ENCODE measurements at regions of chr17 and their contacts with region 1.

Region 1: DNA sequence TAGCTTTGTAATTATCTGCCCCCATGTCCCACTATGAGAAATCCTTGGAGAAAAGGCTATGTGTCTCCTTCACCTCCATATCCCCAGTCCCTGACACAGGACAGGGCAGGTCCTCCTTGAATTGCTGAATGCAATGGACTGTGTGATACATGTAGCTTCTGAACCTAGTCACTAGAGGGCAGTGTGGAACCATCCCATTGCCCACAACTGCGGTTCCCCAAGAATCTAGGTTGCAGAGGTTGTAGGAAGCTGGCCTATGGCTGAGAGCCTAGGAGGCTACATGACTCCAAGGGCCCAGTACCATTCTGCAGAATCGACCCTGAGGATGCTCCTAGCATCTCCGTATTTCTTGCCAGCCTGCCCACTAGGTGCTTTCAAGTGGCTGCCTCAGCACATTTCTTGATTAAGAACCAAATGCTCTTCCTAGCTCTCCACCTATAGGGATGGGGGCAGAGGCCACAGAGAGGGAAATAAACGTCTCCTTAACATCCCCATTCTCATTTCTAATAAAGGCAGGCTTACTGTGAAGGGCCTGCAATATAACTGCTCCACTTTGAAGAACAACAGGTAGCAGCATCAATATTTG is 394.0 kb downstream of the CA10 start:
- DNase-seq: peak; percentile 58
- H3K4me3 ChIP-seq: no peak overlapping the region
- H3K27ac ChIP-seq: no peak overlapping the region
- H3K4me1 ChIP-seq: no peaks in the 10 kb centered on the region
- H3K27me3 ChIP-seq: no peaks in the 10 kb centered on the region
- CTCF ChIP-seq: peak; percentile 92 to 97

Region 2: DNA sequence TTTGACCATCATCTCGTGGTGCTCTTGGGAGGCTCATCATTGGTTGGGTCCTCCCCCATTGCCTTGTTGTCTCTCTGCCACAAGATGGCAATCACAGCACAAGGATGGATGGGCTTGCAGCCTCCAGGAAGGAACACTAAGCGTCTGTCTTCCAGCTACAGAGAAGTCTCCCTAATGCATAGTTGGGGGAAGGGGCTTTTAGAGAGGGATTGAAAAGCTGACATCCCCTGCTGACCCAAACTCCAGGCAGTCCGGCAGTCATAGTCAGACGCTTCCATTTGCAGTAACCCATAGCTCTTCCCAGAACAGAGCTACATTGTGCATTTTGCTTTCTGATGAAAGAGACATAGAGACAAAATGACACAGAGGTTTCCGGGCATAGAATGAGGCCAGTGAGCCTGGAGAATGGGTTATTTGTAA is 392.7 kb before region 1 on chr17:
- CTCF ChIA-PET with region 1: no interaction called
- dilution Hi-C with region 1: no loop called
- in situ Hi-C with region 1: no loop called
- intact Hi-C with region 1: loop called (anchors 2 kb)
- DNase-seq: peak; percentile 47
- H3K4me3 ChIP-seq: no peak overlapping the region
- H3K27ac ChIP-seq: no peak overlapping the region
- H3K4me1 ChIP-seq: no peaks in the 10 kb centered on the region
- H3K27me3 ChIP-seq: no peaks in the 10 kb centered on the region
- CTCF ChIP-seq: peak; percentile 77 to 87

Region 3: GRCh38 chr17:51585514-51586104 is 178.9 kb before region 1 on chr17:
- CTCF ChIA-PET with region 1: no interaction called
- dilution Hi-C with region 1: no loop called
- in situ Hi-C with region 1: no loop called
- intact Hi-C with region 1: loop called (anchors 1 kb)
- DNase-seq: peak; percentile 21
- H3K4me3 ChIP-seq: no peak overlapping the region
- H3K27ac ChIP-seq: no peak overlapping the region
- H3K4me1 ChIP-seq: no peaks in the 10 kb centered on the region
- H3K27me3 ChIP-seq: no peaks in the 10 kb centered on the region
- CTCF ChIP-seq: peak; percentile 86 to 96

Region 4: DNA sequence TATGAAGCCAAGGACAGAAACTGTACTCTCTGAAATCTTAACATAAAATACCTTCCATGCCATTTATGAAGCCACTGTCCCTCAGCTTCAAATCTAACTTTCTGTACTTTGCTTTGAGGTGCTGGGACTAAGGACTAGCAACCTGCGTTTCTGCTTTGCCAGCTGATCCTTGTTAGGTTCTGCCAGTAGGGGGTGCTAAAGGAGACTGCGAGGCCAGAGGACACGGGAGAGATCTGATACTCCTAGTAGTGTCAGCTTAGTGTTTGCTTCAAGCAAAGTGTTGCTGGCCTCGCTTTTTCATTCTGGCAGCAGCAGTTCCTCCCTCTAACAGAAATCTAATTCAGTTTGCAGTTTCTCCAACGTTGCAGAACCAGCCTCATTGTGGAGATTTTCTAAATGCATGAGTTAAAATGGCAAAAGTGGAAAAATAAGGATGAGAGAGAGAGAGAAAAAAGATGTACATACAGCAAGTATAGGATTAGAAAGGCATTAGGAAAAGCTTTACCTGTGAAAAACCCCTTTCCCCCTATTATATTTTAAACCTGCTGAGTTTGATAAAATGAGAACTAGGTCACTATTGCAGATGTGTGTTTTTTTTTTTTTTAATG is 96.6 kb after region 1 on chr17:
- CTCF ChIA-PET with region 1: no interaction called
- dilution Hi-C with region 1: no loop called
- in situ Hi-C with region 1: no loop called
- intact Hi-C with region 1: loop called (anchors 5 kb)
- DNase-seq: peak; percentile 35
- H3K4me3 ChIP-seq: no peak overlapping the region
- H3K27ac ChIP-seq: no peak overlapping the region
- H3K4me1 ChIP-seq: no peaks in the 10 kb centered on the region
- H3K27me3 ChIP-seq: peaks cover 3% of the 10 kb centered on the region
- CTCF ChIP-seq: peak; percentile 63 to 87

Region 5: DNA sequence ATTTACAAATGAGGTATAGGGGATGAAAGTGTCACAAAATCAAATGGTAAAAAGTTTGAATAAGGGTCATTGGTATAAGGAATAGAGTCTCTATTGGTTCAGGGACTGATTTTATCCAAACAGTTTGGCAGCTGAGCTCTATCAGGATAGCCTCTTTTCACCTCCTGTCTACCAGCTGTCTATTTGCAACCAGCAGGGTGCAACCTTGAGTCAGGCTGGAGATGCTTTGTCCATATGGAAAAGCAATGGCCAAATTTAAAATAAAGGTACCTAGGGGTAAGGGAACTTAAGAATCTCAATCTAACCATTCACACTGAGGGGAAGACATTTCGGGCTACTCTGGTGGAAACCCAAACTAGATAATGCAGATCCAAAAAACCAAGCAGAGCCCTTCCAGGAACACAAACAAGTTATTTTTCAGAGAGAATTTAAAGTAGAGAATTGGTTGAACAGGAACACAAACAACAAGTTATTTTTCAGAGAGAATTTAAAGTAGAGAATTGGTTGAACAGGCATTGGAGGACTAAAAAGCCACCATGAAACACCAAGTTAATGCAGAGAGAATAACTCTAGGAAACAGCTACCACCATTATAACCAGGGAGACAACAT is 406.6 kb after region 1 on chr17:
- CTCF ChIA-PET with region 1: no interaction called
- dilution Hi-C with region 1: no loop called
- in situ Hi-C with region 1: no loop called
- intact Hi-C with region 1: loop called (anchors 2 kb)
- DNase-seq: peak; percentile 33
- H3K4me3 ChIP-seq: no peak overlapping the region
- H3K27ac ChIP-seq: no peak overlapping the region
- H3K4me1 ChIP-seq: no peaks in the 10 kb centered on the region
- H3K27me3 ChIP-seq: peaks cover 2% of the 10 kb centered on the region
- CTCF ChIP-seq: peak; percentile 92 to 95

Region 6: GRCh38 chr17:52297230-52298010 is 532.9 kb after region 1 on chr17:
- CTCF ChIA-PET with region 1: no interaction called
- dilution Hi-C with region 1: no loop called
- in situ Hi-C with region 1: loop called in 1 of 2 experiments (anchors 25 kb)
- intact Hi-C with region 1: loop called (anchors 2 kb)
- DNase-seq: peak; percentile 24
- H3K4me3 ChIP-seq: no peak overlapping the region
- H3K27ac ChIP-seq: no peak overlapping the region
- H3K4me1 ChIP-seq: no peaks in the 10 kb centered on the region
- H3K27me3 ChIP-seq: peaks cover 2% of the 10 kb centered on the region
- CTCF ChIP-seq: peak; percentile 65 to 76

Region 7: GRCh38 chr17:52306314-52306713 is 541.8 kb after region 1 on chr17:
- CTCF ChIA-PET with region 1: no interaction called
- dilution Hi-C with region 1: no loop called
- in situ Hi-C with region 1: loop called in 1 of 2 experiments (anchors 25 kb)
- intact Hi-C with region 1: no loop called
- DNase-seq: peak; percentile 12
- H3K4me3 ChIP-seq: no peak overlapping the region
- H3K27ac ChIP-seq: no peak overlapping the region
- H3K4me1 ChIP-seq: no peaks in the 10 kb centered on the region
- H3K27me3 ChIP-seq: no peaks in the 10 kb centered on the region
- CTCF ChIP-seq: no peak